Psoas muscle (tissue), 8 donors: ENCODE measurements at regions of chr5 and their contacts with region 1.

Region 1: GRCh38 chr5:176537608-176538504 is 654 bp upstream of the RNF44 start:
- DNase-seq: peak; percentile 98 to 99
- ATAC-seq: peak; percentile 85 to 86 (median 86)
- H3K4me3 ChIP-seq: peak overlapping the region; percentile 77
- H3K27ac ChIP-seq: peak overlapping the region; percentile 96
- H3K4me1 ChIP-seq: peaks cover 39% of the 10 kb centered on the region
- H3K27me3 ChIP-seq: no peaks in the 10 kb centered on the region
- CTCF ChIP-seq: no peak

Region 2: GRCh38 chr5:176447982-176448608 is 89.8 kb before region 1 on chr5 and contains the start of gene FAF2:
- intact Hi-C with region 1: loop called (anchors 5 kb)
- DNase-seq: peak; percentile 95 to 98
- ATAC-seq: peak; percentile 96 to 98 (median 97)
- H3K4me3 ChIP-seq: peak within 1 kb of the TSS; percentile 91
- H3K27ac ChIP-seq: peak within 1 kb of the TSS; percentile 97
- H3K4me1 ChIP-seq: peaks cover 27% of the 10 kb centered on the region
- H3K27me3 ChIP-seq: no peaks in the 10 kb centered on the region
- CTCF ChIP-seq: peak; percentile 94
- total RNA-seq, gene FAF2: 11.0 to 22.8 (median 14.4) TPM

Region 3: DNA sequence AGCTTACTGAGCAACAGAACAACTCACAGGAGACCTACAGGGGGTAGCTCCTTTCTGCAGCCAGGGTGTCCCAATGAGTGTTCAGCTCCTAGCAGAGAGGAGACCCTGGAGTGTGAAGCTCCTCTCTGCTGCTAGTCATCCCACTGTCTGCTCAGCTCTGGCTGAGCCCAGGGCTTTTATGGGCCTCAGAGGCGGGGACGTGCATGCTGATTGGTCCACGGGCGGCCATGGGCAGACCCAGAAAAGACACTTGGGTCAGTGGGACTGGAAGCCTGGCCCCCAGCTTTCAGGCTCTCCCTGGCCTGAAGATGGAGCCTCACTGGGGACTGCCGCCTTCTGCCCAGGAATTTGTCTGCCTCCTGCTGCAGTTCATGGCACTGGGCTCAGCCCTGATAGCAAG is 150.0 kb after region 1 on chr5:
- intact Hi-C with region 1: no loop called
- DNase-seq: no peak
- ATAC-seq: no peak
- H3K4me3 ChIP-seq: no peak overlapping the region
- H3K27ac ChIP-seq: no peak overlapping the region
- H3K4me1 ChIP-seq: no peaks in the 10 kb centered on the region
- H3K27me3 ChIP-seq: peaks cover 0 to 17% (median 6%) of the 10 kb centered on the region in 3 donors
- CTCF ChIP-seq: no peak